Prostate gland (tissue), 2 donors: ENCODE measurements at regions of chr20 and their contacts with region 1.

Region 1: GRCh38 chr20:62156592-62157386 is 13.2 kb downstream of the SS18L1 start:
- DNase-seq: peak; percentile 30
- H3K4me3 ChIP-seq: no peak overlapping the region
- H3K27ac ChIP-seq: no peak overlapping the region
- H3K4me1 ChIP-seq: no peaks in the 10 kb centered on the region
- H3K27me3 ChIP-seq: no peaks in the 10 kb centered on the region
- CTCF ChIP-seq: peak; percentile 17 to 58 (median 35)
- POLR2A ChIP-seq: no peak

Region 2: DNA sequence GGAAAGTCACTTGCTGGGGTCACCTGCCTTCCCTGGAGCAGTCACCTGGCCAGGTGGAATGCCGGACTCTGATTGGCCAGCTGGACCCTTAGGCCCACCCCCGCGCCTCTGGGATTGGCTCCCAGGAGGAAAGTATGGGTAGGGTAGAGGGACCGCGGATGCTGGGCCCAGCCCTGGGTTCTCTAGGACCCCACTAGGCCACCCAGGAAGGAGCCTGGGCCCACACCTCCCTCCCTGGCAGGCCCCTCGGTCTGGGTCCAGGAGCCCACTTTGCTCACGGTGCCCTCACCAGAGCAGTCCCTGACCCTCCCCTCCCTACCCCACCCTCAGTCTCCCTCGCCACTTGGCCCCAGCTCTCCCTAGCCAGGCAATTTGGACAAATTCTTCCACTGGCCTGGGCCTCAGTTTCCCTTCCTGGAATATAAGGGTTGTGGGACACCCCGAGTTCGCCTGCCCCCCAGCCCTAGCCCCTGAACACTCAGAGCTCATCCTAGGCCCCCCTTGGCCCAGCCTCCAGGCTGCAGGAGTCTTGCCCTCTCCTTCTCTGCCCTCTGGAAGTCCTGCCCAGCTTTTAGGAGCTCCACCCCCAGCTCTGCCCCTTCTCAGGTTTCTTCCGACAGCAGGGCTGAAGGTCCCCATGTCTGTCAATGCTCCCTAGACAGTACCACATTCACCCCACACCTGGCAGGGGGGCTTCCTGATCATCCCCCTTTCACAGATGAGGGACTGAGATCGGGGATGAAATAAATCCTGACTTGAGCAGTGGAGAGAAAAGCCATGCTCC is 390.7 kb before region 1 on chr20:
- intact Hi-C with region 1: no loop called
- DNase-seq: no peak
- H3K4me3 ChIP-seq: no peak overlapping the region
- H3K27ac ChIP-seq: no peak overlapping the region
- H3K4me1 ChIP-seq: no peaks in the 10 kb centered on the region
- H3K27me3 ChIP-seq: peaks cover 5% of the 10 kb centered on the region
- CTCF ChIP-seq: no peak
- POLR2A ChIP-seq: no peak

Region 3: GRCh38 chr20:61912665-61913422 is 243.9 kb before region 1 on chr20:
- intact Hi-C with region 1: no loop called
- DNase-seq: no peak
- H3K4me3 ChIP-seq: no peak overlapping the region
- H3K27ac ChIP-seq: no peak overlapping the region
- H3K4me1 ChIP-seq: no peaks in the 10 kb centered on the region
- H3K27me3 ChIP-seq: no peaks in the 10 kb centered on the region
- CTCF ChIP-seq: no peak
- POLR2A ChIP-seq: no peak

Region 4: DNA sequence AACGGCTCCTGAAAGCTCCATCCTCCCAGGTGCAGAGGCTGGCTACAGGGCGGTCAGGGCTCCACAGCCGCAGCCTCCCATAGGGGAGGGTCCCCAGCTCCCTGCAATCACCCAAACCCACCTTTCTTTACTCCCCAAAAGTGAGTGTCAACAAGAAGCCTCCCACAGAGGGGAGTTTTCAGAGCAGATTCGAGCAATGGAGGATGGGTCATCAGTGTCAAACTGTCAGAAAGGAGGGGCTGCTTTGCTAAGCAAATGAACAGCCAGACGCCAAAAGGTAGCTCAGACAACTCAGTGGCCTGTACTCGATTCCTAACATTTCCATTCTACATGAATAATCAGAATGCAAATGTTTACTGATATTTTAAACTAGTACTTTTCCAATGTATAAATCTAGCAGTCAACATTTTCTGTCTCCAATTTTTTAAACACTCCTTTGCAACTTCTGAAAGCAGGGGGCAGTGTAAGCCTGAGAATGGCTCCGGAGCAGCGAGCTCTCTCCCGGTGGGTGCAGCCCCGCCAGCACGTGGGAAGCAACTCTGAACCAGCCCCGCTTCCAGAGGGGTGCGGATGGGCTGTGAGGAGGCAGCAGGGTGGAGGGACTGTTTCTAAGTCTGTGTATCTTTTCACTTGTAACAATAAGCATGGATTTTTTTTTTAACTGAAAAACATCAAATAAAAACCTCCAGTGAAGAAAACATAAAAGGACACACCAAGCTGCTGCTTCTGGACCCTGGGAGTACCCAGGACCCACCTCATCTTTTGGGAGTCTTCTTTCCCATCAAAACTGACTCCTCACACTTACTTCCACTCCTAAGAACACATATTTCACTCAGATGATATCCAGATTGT is 146.0 kb before region 1 on chr20:
- intact Hi-C with region 1: loop called (anchors 5 kb)
- DNase-seq: peak; percentile 43
- H3K4me3 ChIP-seq: no peak overlapping the region
- H3K27ac ChIP-seq: no peak overlapping the region
- H3K4me1 ChIP-seq: no peaks in the 10 kb centered on the region
- H3K27me3 ChIP-seq: no peaks in the 10 kb centered on the region
- CTCF ChIP-seq: peak; percentile 22 to 79 (median 63)
- POLR2A ChIP-seq: no peak

Region 5: DNA sequence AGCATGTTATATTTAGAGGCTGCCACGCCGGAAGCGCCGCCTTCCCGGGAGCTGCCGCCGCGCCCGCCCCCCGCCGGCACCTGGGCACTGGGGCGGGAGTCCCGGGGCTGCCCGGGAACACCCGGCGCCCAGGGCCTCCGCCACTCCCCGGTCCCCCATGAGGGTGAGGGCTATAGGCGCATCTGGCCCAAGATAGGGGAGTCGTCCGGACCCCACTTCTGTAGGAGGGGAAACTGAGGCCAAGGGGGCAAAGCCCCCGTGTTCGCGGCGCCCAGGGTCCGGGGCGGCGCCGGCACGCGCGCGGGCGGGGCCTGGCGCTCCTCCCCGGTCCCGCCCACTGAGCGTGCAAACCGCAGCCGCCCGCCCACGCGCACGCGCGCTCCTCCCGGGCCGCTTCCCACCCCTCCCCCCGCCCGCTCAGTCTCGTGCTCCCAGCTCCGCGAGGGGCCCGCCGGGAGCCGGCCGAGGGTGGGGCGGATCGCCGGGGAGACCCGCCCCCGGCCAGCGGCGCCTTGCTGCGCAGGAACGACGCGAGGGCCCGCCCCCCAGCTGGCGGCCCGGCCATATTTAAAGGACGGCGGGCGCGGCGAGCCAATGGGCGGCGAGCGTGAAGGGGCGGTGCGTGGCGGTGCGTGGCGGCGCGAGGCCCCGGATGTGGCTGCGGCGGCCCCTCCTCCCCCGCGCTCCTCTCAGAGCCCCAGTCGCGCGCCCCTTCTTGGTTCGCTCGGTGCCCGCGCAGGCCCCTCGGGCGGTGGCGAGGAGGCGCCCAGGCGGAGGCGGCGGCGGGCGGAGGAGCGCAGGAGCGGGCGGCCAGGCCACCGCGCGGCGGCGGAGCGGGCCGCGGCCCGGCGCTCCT is 34.8 kb before region 1 on chr20 and contains the start of gene LSM14B:
- intact Hi-C with region 1: no loop called
- DNase-seq: peak; percentile 96
- H3K4me3 ChIP-seq: peak within 1 kb of the TSS; percentile 82 to 93
- H3K27ac ChIP-seq: peak within 1 kb of the TSS; percentile 96 to 98
- H3K4me1 ChIP-seq: peaks cover 10% of the 10 kb centered on the region
- H3K27me3 ChIP-seq: no peaks in the 10 kb centered on the region
- CTCF ChIP-seq: peak in 1 of 4 experiments; percentile 10
- POLR2A ChIP-seq: peak; percentile 72
- total RNA-seq, gene LSM14B: 39.7 to 87.1 TPM